Esophagus squamous epithelium (tissue), 5 donors: ENCODE measurements at regions of chr17 and their contacts with region 1.

Region 1: GRCh38 chr17:82836823-82837357 is 2.9 kb downstream of the ZNF750 start:
- DNase-seq: no peak
- H3K4me3 ChIP-seq: peak overlapping the region; percentile 37 to 57 (median 51)
- H3K27ac ChIP-seq: peak overlapping the region; percentile 88 to 93 (median 90)
- H3K4me1 ChIP-seq: peaks cover 3 to 59% (median 7%) of the 10 kb centered on the region in 3 donors
- H3K27me3 ChIP-seq: no peaks in the 10 kb centered on the region
- CTCF ChIP-seq: peak in 3 of 6 experiments; percentile 11 to 53 (median 46)
- POLR2A ChIP-seq: no peak

Region 2: GRCh38 chr17:82791532-82791931 is 45.4 kb before region 1 on chr17:
- intact Hi-C with region 1: loop called (anchors 5 kb)
- DNase-seq: no peak
- H3K4me3 ChIP-seq: no peak overlapping the region
- H3K27ac ChIP-seq: peak overlapping the region in 1 of 4 donors; percentile 17
- H3K4me1 ChIP-seq: peaks cover 33 to 94% (median 34%) of the 10 kb centered on the region in 3 donors
- H3K27me3 ChIP-seq: no peaks in the 10 kb centered on the region
- CTCF ChIP-seq: no peak
- POLR2A ChIP-seq: no peak

Region 3: DNA sequence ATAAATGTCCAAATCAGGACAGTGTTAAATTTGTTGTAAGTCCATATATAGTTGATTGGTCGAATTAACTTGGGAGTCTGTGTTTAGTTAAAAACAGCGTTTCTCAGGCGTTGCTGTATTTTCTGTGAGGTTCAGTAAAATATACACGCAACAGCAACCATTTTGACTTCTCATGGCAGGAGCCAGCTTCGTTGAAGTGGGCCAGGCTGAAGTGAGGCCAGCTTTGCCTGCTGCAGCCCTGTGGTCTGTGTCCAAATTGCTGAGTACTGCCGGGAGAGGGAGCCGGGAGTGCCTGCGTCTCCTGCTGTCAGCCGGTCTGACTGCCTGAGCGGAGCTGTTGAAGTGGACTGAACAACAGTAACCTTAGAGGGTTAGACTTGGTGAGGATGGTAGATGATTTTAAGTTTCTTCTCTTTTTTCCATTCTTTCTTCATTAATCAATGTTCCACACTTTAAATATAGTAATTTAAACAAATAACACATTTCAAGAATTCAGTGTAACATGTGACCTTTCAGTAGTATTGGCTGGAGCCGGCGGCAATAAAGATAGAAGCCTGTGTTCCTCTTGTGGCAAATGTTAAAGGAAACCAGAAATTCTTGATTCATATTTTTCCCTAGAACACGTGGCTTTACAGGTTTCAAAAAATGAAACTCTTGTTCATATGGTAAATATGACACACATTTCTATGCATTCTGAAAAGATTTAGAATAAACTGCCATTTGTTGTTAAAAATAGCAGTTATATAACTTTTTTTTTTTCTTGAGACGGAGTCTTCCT is 39.9 kb after region 1 on chr17:
- intact Hi-C with region 1: loop called (anchors 5 kb)
- DNase-seq: no peak
- H3K4me3 ChIP-seq: peak overlapping the region in 2 of 4 donors; percentile 2 to 15
- H3K27ac ChIP-seq: peak overlapping the region; percentile 81 to 95 (median 92)
- H3K4me1 ChIP-seq: peaks cover 33 to 100% (median 33%) of the 10 kb centered on the region in 3 donors
- H3K27me3 ChIP-seq: no peaks in the 10 kb centered on the region
- CTCF ChIP-seq: peak in 5 of 6 experiments; percentile 30 to 62 (median 50)
- POLR2A ChIP-seq: peak in 1 of 4 donors; percentile 15

Region 4: DNA sequence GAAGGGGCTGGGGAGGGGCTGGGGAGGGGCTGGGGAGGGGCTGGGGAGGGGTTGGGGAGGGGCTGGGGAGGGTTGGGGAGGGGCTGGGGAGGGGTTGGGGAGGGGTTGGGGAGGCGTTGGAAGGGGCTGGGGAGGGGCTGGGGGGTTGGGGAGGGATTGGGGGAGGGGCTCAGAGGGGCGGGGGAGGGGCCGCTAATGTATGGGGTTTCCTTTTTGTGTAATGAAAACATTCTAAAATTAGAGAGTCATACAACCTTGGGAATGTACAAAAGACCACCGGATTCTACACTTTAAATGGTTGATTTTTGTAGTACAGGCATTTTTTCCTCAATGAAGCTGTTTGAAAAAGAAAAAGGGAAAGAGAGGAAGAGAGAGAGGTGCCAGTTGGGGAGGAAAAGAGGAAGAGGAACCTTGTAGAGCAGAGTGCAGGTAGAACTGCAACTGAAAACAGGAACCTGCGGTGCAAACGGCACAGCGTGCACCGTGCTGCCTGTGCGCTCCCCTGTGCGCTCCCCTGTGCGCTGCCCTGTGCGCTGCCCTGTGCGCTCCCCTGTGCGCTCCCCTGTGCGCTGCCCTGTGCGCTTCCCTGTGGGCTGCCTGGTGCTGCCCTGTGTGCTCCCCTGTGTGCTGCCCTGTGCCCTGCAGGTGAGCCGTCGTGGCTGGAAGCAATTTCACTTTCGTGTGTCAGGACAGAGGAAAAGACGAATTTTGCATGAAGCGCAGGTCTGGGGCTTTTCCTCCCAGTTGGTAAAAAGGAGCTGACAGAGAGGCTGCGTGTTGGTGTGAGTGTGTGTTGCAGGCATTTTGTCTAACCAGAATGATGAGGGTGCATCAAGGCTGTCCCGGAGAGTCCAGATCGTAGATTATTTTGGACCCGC is 283.3 kb after region 1 on chr17:
- intact Hi-C with region 1: no loop called
- DNase-seq: no peak
- H3K4me3 ChIP-seq: peak overlapping the region in 1 of 4 donors; percentile 6
- H3K27ac ChIP-seq: no peak overlapping the region
- H3K4me1 ChIP-seq: peaks cover 0 to 7% (median 0%) of the 10 kb centered on the region in 3 donors
- H3K27me3 ChIP-seq: peaks cover 0 to 57% (median 0%) of the 10 kb centered on the region in 4 donors
- CTCF ChIP-seq: no peak
- POLR2A ChIP-seq: no peak